Left lung (tissue), 14 donors: ENCODE measurements at regions of chr9 and their contacts with region 1.

Region 1: DNA sequence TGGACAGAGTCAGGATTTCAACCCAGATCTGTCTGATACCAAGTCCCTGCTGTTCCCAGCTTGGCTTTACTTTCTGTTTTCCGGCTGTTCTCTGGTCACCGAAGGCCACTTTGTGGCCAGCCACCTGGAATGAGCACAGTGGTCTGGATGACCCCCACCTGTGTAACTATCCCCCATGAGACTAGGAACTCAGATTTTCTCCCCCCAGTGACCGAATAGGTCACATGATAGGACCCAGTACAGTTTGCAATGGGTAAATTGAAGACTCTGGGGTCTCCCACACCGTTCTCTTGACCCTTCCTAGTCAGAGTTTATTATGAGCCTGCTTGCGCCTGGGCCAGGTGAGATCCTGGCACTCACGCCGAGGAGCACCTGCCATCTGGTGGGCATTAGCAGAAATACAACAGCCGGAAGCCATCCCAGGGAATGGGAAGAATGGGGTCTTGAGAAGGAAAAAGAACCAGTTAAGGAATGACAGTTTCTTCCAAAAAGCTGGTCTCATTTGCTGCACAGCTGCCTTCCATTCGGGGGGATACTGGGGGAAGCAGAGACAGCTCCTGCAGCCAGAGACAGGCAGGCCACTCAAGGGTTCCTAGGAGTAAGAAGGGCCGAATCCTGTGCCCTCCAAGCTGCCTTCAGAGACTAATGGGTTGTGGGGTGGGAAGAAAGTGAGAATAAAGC is 7.1 kb downstream of the PHYHD1 start:
- DNase-seq: peak in 2 of 4 donors; percentile 30 to 56
- ATAC-seq: peak; percentile 95
- H3K4me3 ChIP-seq: no peak overlapping the region
- H3K27ac ChIP-seq: no peak overlapping the region
- H3K4me1 ChIP-seq: peaks cover 0 to 9% of the 10 kb centered on the region in 2 donors
- H3K27me3 ChIP-seq: no peaks in the 10 kb centered on the region
- CTCF ChIP-seq: peak; percentile 73 to 76

Region 2: GRCh38 chr9:128689820-128690692 is 237.8 kb before region 1 on chr9:
- intact Hi-C with region 1: no loop called
- DNase-seq: peak in 3 of 4 donors; percentile 26 to 83 (median 68)
- ATAC-seq: no peak
- H3K4me3 ChIP-seq: peak overlapping the region; percentile 68 to 90
- H3K27ac ChIP-seq: peak overlapping the region; percentile 37 to 48
- H3K4me1 ChIP-seq: peaks cover 20 to 57% of the 10 kb centered on the region in 2 donors
- H3K27me3 ChIP-seq: no peaks in the 10 kb centered on the region
- CTCF ChIP-seq: no peak

Region 3: DNA sequence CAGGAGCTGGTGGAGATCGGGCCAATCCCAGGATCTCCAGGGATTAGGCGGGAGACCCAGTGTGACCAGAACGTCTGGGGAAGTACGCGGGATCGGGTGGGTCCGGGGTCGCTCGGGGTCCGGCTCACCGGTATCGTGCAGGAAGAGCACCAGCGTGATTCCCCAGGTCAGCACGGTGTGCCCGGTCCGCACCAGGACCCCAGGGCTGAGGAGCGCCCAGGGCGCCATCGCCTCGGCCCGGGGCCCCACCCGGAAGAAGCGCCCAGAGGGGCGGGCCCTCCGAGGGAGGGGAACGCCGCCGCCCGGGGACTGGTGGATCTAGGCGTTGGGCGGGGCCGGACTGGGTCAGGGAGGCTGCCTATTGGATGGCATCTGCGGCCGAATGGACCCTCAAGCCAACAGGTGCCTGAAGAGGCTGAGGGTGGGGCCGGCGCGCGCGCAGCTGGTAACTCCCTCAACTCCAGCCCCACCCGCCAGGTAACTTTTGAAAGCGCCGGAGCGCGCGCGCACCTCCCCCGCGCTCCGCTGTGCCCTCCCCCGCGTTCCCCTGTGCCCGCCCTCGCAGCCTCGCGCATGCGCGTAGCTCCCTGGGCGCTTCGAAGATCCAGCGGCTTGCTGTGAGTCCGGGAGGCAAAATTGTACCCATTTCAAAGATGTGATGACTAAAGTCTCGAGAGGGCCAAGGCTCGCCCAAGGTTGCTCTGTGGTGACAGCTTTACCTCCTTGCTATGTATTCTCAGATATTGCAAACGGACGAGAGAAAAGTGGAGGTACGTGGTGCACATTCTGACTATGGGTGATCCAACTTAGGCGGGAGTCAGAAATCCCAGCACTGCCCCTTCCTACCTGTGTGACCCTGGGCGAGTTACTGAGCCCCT is 203.8 kb before region 1 on chr9 and contains the start of gene ZDHHC12:
- intact Hi-C with region 1: no loop called
- DNase-seq: peak; percentile 74 to 99 (median 95)
- ATAC-seq: peak; percentile 96
- H3K4me3 ChIP-seq: peak within 1 kb of the TSS; percentile 70 to 75
- H3K27ac ChIP-seq: peak within 1 kb of the TSS; percentile 71 to 76
- H3K4me1 ChIP-seq: peaks cover 0 to 21% of the 10 kb centered on the region in 2 donors
- H3K27me3 ChIP-seq: no peaks in the 10 kb centered on the region
- CTCF ChIP-seq: no peak
- polyA plus RNA-seq, gene ZDHHC12: 10.8 to 13.3 (median 11.3) TPM

Region 4: GRCh38 chr9:128863647-128864046 is 64.2 kb before region 1 on chr9:
- intact Hi-C with region 1: loop called in 1 of 2 experiments (anchors 5 kb)
- DNase-seq: peak; percentile 35 to 95 (median 70)
- ATAC-seq: peak; percentile 84
- H3K4me3 ChIP-seq: no peak overlapping the region
- H3K27ac ChIP-seq: no peak overlapping the region
- H3K4me1 ChIP-seq: peaks cover 0 to 16% of the 10 kb centered on the region in 2 donors
- H3K27me3 ChIP-seq: no peaks in the 10 kb centered on the region
- CTCF ChIP-seq: peak; percentile 95 to 97